BJ (cell line): ENCODE measurements at regions of chr4 and their contacts with region 1.

Region 1: DNA sequence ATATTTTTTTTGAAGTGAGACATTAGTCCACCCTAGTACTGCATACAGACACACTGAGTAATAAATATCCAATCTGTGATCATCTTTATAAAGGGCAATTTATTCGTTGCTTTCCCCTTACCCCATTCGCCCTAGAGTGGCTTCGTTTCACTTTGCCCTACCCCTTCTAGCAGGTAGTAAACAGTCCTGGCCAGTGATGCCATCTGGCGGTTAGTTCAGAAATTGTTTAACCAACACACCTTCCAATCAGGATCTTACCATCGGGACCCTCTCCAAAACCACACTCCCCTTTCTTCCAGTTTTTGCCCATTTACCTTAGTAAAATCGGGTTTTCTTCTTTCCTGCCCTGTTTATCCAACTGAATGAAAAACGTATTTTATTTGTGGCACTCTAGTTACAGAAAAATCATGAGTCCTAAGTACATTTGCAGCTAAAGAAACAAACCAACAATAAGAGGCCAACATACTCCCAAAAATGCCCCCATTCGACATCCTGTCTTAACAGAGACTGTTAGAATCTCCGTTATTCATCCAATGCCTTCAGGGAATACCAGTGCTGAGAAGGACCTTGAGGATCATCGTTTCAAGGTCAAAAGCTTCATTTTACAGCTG is 2.2 kb downstream of the PPA2 start:
- DNase-seq: no peak
- H3K4me3 ChIP-seq: no peak overlapping the region
- H3K27me3 ChIP-seq: no peaks in the 10 kb centered on the region; the same call in 1 of the 2 replicates
- CTCF ChIP-seq: peak; percentile 71

Region 2: GRCh38 chr4:105140684-105141490 is 330.8 kb before region 1 on chr4:
- CTCF ChIA-PET with region 1: interaction called, 21 read pairs
- POLR2A ChIA-PET with region 1: no interaction called
- DNase-seq: no peak
- H3K4me3 ChIP-seq: no peak overlapping the region
- H3K27me3 ChIP-seq: no peaks in the 10 kb centered on the region
- CTCF ChIP-seq: peak; percentile 76

Region 3: DNA sequence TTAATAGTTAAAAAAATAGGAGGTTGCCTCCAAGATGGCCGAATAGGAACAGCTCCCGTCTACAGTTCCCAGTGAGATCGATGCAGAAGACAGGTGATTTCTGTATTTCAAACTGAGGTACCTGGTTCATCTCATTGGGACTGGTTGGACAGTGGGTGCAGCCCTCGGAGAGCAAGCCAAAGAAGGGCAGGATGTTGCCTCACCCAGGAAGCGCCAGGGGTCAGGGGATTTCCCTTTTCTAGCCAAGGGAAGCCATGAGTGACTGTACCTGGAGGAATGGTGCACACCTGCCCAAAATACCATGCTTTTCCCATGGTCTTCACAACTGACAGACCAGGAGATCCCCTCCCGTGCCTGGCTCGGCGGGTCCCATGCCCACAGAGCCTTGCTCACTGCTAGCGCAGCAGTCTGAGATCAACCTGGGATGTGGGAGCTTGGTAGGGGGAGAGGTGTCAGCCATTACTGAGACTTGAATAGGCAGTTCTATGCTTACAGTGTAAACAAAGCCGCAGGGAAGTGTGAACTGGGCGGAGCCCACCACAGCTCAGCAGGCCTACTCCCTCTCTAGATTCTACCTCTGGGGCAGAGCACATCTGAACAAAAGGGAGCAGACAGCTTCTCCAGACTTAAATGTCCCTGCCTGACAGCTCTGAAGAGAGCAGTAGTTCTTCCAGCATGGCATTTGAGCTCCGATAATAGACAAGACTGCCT is 45.3 kb before region 1 on chr4:
- CTCF ChIA-PET with region 1: no interaction called
- POLR2A ChIA-PET with region 1: no interaction called
- DNase-seq: no peak
- H3K4me3 ChIP-seq: no peak overlapping the region
- H3K27me3 ChIP-seq: no peaks in the 10 kb centered on the region
- CTCF ChIP-seq: no peak

Region 4: DNA sequence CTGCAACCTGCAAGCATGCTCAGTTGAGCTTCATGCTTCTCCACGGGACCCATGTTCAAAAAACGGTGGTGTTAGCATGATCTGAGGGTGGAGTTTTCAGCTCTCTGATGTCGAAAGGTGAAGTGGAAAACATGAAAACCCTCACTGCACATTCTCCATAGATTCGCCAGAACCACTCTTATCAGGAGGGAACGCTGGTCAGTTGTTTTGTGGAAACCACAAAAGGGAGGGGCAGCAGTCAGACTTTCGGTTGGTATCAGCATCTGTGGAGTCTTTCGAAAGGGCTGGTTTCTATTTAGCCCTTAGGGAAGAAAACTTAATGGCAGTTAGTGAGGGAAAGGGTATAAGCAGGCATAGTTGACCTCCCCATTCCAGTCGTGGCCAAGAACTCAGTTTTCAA is 10.4 kb before region 1 on chr4:
- CTCF ChIA-PET with region 1: interaction called, 10 read pairs
- POLR2A ChIA-PET with region 1: no interaction called
- DNase-seq: no peak
- H3K4me3 ChIP-seq: no peak overlapping the region
- H3K27me3 ChIP-seq: no peaks in the 10 kb centered on the region
- CTCF ChIP-seq: no peak

Region 5: DNA sequence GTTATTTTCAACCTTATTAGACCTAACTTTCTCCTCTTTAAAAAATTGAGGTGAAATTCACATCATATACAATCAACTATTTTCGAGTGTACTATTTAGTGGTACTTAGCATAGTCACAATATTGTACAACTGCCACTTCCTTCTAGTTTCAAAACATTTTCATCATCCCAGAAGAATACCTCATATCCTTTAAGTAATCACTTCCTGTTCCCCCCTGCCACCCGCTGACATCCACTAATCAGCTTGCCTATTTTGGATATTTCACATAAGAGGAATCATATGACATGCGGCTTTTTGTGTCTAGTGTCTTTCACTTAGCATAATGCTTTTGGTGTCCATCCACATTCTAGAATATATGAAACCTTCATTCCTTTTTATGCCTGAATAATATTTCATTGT is 12.2 kb after region 1 on chr4:
- CTCF ChIA-PET with region 1: interaction called, 11 read pairs
- POLR2A ChIA-PET with region 1: no interaction called
- DNase-seq: no peak
- H3K4me3 ChIP-seq: no peak overlapping the region
- H3K27me3 ChIP-seq: no peaks in the 10 kb centered on the region
- CTCF ChIP-seq: no peak